GM12878 (cell line): ENCODE measurements at regions of chr5 and their contacts with region 1.

Region 1: GRCh38 chr5:10655161-10655971 is 91.5 kb downstream of the ANKRD33B start:
- DNase-seq: no peak
- ATAC-seq: peak; percentile 87
- H3K4me3 ChIP-seq: no peak overlapping the region
- H3K27ac ChIP-seq: peak overlapping the region; percentile 4; the same call in 1 of the 2 replicates
- H3K4me1 ChIP-seq: no peaks in the 10 kb centered on the region; the same call in 1 of the 2 replicates
- H3K27me3 ChIP-seq: no peaks in the 10 kb centered on the region
- CTCF ChIP-seq: no peak
- EP300 ChIP-seq: no peak
- POLR2A ChIP-seq: no peak; the same call in 1 of the 2 replicates
- RAD21 ChIP-seq: no peak

Region 2: DNA sequence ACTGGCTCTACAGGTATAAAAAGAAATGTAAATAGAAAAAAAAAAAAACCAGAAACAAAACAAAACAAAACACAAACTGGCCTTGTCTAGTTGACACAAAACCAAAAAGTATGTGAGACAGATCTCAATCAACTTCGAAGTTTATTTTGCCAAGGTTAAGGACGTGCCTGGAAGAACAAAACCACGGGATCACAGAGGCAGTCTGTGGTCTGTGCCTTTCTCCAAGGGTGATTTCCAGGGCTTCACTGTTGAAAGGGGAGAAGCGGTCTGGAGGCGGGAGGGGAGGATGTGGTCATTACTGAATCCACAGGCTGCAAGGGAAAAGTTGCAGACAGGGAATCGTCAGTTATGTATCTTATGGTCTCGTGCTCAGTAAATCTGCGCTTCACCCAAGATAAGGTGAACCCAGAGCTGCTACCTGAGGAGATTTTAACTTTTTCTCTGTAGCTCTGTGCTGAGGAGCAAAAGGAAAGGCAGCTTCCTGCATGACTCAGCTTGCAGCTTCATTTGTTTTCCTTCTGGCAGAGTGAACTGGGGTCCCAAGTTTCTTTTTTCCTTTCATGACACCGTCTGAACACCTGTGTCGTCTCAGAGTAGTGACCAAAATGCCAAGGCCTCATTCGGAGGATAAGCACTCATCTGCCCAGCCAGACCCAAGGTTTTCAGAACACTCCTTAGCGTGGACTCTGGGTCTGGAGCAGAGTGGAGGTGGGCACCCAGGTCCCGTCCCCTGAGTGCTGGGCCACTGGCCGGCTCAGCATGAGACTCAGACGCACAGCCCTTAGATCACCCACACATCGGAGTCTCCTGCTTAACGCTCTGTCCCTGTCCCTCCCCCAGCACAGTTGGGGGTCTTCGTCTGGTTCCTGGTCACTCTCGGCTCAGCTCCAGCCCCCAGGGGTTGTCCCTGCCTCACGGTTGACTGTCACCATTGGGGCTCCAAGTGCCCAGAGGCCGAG is 187.8 kb before region 1 on chr5:
- CTCF ChIA-PET with region 1: no interaction called
- POLR2A ChIA-PET with region 1: no interaction called
- RAD21 ChIA-PET with region 1: no interaction called
- SMC1A ChIA-PET with region 1: no interaction called
- in situ Hi-C with region 1: no loop called
- intact Hi-C with region 1: no loop called
- DNase-seq: no peak
- ATAC-seq: no peak; the same call in 2 of the 3 replicates
- H3K4me3 ChIP-seq: no peak overlapping the region
- H3K27ac ChIP-seq: no peak overlapping the region
- H3K4me1 ChIP-seq: peaks cover 5% of the 10 kb centered on the region; the same call in 1 of the 2 replicates
- H3K27me3 ChIP-seq: no peaks in the 10 kb centered on the region; a peak in 2 of 4 replicates
- CTCF ChIP-seq: no peak
- EP300 ChIP-seq: no peak
- POLR2A ChIP-seq: no peak
- RAD21 ChIP-seq: no peak

Region 3: DNA sequence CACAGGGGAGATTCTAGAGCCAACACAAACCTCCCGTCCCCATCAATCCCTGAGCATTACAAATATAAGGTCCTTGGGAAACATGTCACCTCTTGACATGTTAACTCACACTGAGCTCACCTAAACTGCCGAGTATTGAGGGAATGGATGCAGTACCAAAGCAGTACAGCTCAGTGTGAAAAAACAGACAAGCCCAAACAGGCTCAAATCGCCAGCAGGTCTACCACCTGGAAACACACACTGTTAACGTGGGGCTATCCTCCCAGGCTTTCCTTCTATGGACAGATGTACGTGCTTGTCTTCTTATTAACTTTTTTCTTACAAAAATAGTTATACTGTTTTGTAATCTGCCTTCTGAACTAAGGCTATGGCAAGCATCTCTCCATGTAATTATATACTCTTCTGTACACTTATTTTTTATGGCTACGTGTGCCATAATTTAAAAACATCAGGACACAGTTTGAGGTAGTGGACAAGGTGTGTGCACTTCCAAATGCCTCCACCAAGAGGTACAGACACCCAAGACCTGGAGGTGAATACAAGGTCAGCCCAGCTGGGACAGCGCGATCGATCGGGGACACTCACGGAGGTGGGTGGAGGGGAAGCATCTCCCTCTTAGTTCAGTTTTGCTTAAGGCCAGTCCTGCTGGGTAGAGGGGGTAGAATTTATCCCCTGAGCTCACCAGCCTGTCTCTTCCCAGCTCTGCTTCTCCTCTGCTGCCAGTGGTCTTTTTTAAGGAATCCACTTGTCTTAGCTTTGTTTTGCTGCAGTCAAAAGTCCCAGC is 29.1 kb after region 1 on chr5:
- CTCF ChIA-PET with region 1: interaction called, 4 read pairs
- POLR2A ChIA-PET with region 1: no interaction called
- RAD21 ChIA-PET with region 1: interaction called, 3 read pairs
- SMC1A ChIA-PET with region 1: interaction called, 4 read pairs
- in situ Hi-C with region 1: no loop called
- intact Hi-C with region 1: loop called (anchors 2 kb)
- DNase-seq: no peak
- ATAC-seq: peak; percentile 76
- H3K4me3 ChIP-seq: 0 out of 2 replicates have a peak overlapping the region, but pooled peaks have one; percentile 17
- H3K27ac ChIP-seq: peak overlapping the region; percentile 88
- H3K4me1 ChIP-seq: peaks cover 23% of the 10 kb centered on the region
- H3K27me3 ChIP-seq: no peaks in the 10 kb centered on the region
- CTCF ChIP-seq: no peak
- EP300 ChIP-seq: no peak
- POLR2A ChIP-seq: no peak
- RAD21 ChIP-seq: no peak

Region 4: DNA sequence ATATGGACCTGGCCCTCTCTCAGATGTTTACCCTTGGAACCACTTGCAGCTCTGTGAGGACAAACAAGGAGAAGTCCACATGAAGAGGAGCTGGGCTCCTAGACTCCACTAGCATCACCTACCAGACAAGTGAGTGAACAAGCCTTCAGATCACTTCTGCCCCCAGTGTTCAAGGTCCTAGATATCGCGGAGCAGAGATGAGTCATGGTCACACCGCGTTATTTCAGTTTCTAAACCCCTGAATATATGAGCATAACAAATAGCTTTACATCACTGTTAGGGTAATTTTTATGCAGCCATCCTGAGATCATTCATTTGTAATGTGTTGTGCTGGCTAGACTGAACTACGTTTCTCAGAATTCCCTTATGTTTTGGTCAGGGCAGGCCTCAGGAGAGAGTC is 182.7 kb after region 1 on chr5:
- CTCF ChIA-PET with region 1: no interaction called
- POLR2A ChIA-PET with region 1: no interaction called
- RAD21 ChIA-PET with region 1: no interaction called
- SMC1A ChIA-PET with region 1: no interaction called
- in situ Hi-C with region 1: no loop called
- intact Hi-C with region 1: no loop called
- DNase-seq: no peak
- ATAC-seq: peak; percentile 86
- H3K4me3 ChIP-seq: no peak overlapping the region
- H3K27ac ChIP-seq: no peak overlapping the region
- H3K4me1 ChIP-seq: no peaks in the 10 kb centered on the region
- H3K27me3 ChIP-seq: no peaks in the 10 kb centered on the region; a peak in 1 of 4 replicates
- CTCF ChIP-seq: no peak
- EP300 ChIP-seq: no peak
- POLR2A ChIP-seq: no peak
- RAD21 ChIP-seq: no peak